Activated T-helper 2 cell treated with anti-CD3 and anti-CD28 coated beads, Interferon-gamma antibody, Interleukin-2, Interleukin-4, amounts not matched to agents 10 μg/mL and 5 μg/mL and 100 μg/mL, durations not matched to agents 14 hours and 24 hours and 36 hours (primary cell): ENCODE measurements at regions of chr9 and their contacts with region 1.

Region 1: GRCh38 chr9:83622939-83623678 is at the start of gene IDNK:
- DNase-seq: peak; percentile 63
- H3K4me3 Mint-ChIP-seq: peak within 1 kb of the TSS; percentile 90
- H3K27ac Mint-ChIP-seq: peak within 1 kb of the TSS; percentile 99
- H3K4me1 Mint-ChIP-seq: peaks cover 22% of the 10 kb centered on the region
- H3K27me3 Mint-ChIP-seq: peaks cover 8% of the 10 kb centered on the region
- total RNA-seq, gene IDNK: 4.9 and 5.1 TPM in 2 replicates

Region 2: DNA sequence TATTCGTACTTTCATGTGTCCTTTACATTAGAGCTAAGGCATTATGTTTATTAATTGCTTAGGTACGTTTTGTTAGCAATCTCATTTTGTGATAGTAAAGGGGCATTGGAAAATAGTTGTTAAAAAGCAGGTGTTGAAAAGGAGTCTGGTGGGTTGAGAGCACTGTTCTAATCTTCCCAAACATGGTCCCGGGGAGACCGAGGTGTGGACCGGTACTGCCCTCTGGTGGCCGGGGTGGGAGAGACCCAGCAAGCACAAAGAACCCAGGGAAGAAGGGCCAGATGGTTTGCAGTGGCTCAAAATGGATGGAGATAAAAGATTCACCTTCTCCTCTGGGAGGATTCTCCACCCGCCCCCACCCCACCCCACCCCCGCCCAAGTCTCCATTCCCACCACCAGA is 26.0 kb after region 1 on chr9:
- intact Hi-C with region 1: loop called (anchors 1 kb)
- DNase-seq: peak; percentile 48
- H3K4me3 Mint-ChIP-seq: no peak overlapping the region
- H3K27ac Mint-ChIP-seq: no peak overlapping the region
- H3K4me1 Mint-ChIP-seq: no peaks in the 10 kb centered on the region
- H3K27me3 Mint-ChIP-seq: no peaks in the 10 kb centered on the region

Region 3: DNA sequence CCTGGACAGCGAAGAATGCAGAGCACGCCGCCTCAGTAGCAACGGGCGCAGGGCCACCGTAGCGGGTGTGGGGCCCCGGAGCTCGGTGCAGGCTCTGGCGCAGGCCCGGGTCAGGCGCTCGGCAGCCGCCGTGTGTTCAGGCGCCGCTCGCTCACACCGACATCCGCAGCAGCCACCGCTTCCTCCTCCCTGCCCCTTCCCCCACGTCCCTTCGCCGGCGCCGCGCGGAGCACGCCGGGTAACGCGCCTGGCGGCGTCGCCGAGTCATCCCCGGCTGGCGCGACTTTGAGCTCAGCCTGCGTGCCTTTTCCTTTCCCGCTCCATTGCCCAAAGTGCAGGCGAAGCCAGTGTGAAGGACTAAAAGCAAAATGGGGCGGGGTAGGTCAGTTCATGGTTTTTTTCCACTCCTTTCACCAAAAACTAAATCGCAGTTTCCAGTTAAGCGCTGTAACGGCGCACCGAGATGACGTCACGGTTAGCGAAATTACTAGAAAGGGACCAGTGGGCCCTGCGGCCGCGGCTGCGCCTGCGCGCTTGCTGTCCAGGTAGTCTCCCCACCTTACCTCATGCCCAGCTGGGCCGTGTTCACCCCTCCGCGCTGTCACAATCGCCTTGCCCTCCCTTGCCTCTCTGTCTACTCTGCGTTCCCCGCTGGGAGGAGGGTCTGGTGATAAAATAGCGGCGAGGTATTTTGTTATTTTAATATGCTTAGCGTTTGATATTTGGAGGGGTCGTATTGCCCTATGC is 84.8 kb after region 1 on chr9 and contains the start of gene UBQLN1:
- intact Hi-C with region 1: loop called (anchors 1 kb)
- DNase-seq: peak; percentile 90
- H3K4me3 Mint-ChIP-seq: peak within 1 kb of the TSS; percentile 88
- H3K27ac Mint-ChIP-seq: peak within 1 kb of the TSS; percentile 96
- H3K4me1 Mint-ChIP-seq: peaks cover 27% of the 10 kb centered on the region
- H3K27me3 Mint-ChIP-seq: no peaks in the 10 kb centered on the region
- total RNA-seq, gene UBQLN1: 138 and 140 TPM in 2 replicates

Region 4: DNA sequence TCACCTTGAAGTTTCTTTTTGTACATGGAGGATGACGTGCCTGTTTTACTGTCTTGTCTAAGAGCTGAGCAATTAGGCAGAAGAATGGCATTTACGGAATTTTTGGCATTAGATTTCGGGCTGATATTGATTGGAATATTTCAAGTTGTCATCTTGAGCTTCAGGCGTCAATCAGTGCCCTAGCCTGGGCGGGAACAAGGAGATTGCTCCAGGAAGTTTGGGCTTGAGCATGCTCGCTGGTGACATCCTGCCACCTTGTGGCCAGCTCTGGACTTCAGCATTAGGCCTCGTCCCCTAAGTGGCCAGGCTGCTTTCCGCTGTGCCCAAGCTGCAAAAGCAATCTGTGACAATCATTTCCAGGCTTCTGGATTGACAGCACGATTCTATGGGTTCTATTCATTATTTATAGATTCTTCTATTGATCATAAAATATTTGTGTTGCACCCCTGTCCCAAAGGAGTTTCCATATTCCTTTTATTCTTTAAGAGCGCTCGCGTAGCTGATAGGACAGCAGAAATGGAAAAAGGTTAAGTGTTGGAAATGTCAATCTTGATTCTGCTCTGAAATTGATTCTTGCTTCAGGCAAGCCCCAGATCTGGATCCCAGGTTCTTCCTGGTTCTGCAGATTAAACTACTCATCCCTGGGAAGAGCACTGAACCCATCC is 638.1 kb after region 1 on chr9:
- intact Hi-C with region 1: loop called (anchors 2 kb)
- DNase-seq: peak; percentile 25
- H3K4me3 Mint-ChIP-seq: no peak overlapping the region
- H3K27ac Mint-ChIP-seq: no peak overlapping the region
- H3K4me1 Mint-ChIP-seq: peaks cover 7% of the 10 kb centered on the region
- H3K27me3 Mint-ChIP-seq: peaks cover 9% of the 10 kb centered on the region